Right cardiac atrium (tissue), 5 donors: ENCODE measurements at regions of chr6 and their contacts with region 1.

Region 1: GRCh38 chr6:34055223-34055933 is 90.5 kb downstream of the GRM4 start:
- DNase-seq: peak; percentile 50 to 82 (median 76)
- ATAC-seq: peak; percentile 44 to 64
- H3K4me3 ChIP-seq: no peak overlapping the region
- H3K27ac ChIP-seq: no peak overlapping the region
- H3K4me1 ChIP-seq: no peaks in the 10 kb centered on the region
- H3K27me3 ChIP-seq: no peaks in the 10 kb centered on the region

Region 2: GRCh38 chr6:34015586-34015985 is 39.8 kb before region 1 on chr6:
- intact Hi-C with region 1: no loop called
- DNase-seq: no peak
- ATAC-seq: no peak
- H3K4me3 ChIP-seq: no peak overlapping the region
- H3K27ac ChIP-seq: no peak overlapping the region
- H3K4me1 ChIP-seq: no peaks in the 10 kb centered on the region
- H3K27me3 ChIP-seq: no peaks in the 10 kb centered on the region

Region 3: GRCh38 chr6:34154668-34155447 is 99.5 kb after region 1 on chr6:
- intact Hi-C with region 1: loop called (anchors 2 to 5 kb)
- DNase-seq: peak; percentile 41 to 83 (median 81)
- ATAC-seq: peak; percentile 73 to 80
- H3K4me3 ChIP-seq: peak overlapping the region; percentile 11
- H3K27ac ChIP-seq: no peak overlapping the region
- H3K4me1 ChIP-seq: no peaks in the 10 kb centered on the region
- H3K27me3 ChIP-seq: no peaks in the 10 kb centered on the region